Caco-2 (cell line): ENCODE measurements at regions of chr13 and their contacts with region 1.

Region 1: GRCh38 chr13:32228330-32229041 is 86.7 kb downstream of the ZAR1L start:
- DNase-seq: peak; percentile 81 to 85
- H3K4me3 ChIP-seq: no peak overlapping the region
- H3K4me3 Mint-ChIP-seq: peak overlapping the region; percentile 6
- H3K27ac Mint-ChIP-seq: peak overlapping the region; percentile 14
- H3K4me1 ChIP-seq: peaks cover 46% of the 10 kb centered on the region
- H3K4me1 Mint-ChIP-seq: peaks cover 26% of the 10 kb centered on the region
- H3K27me3 ChIP-seq: no peaks in the 10 kb centered on the region
- H3K27me3 Mint-ChIP-seq: no peaks in the 10 kb centered on the region
- CTCF ChIP-seq: peak; percentile 10 to 39

Region 2: GRCh38 chr13:32142956-32143375 is 85.5 kb before region 1 on chr13:
- CTCF ChIA-PET with region 1: no interaction called
- POLR2A ChIA-PET with region 1: no interaction called
- intact Hi-C with region 1: loop called (anchors 2 kb)
- DNase-seq: peak; percentile 88 to 93
- H3K4me3 ChIP-seq: no peak overlapping the region
- H3K4me3 Mint-ChIP-seq: peak overlapping the region; percentile 34
- H3K27ac Mint-ChIP-seq: peak overlapping the region; percentile 89
- H3K4me1 ChIP-seq: peaks cover 50% of the 10 kb centered on the region
- H3K4me1 Mint-ChIP-seq: peaks cover 64% of the 10 kb centered on the region
- H3K27me3 ChIP-seq: no peaks in the 10 kb centered on the region; the same call in 1 of the 2 replicates
- H3K27me3 Mint-ChIP-seq: no peaks in the 10 kb centered on the region
- CTCF ChIP-seq: no peak

Region 3: GRCh38 chr13:32216286-32216685 is 12.2 kb before region 1 on chr13:
- CTCF ChIA-PET with region 1: interaction called, 7 read pairs
- POLR2A ChIA-PET with region 1: interaction called, 11 read pairs
- intact Hi-C with region 1: loop called (anchors 1 kb)
- DNase-seq: peak; percentile 64 to 67
- H3K4me3 ChIP-seq: no peak overlapping the region
- H3K4me3 Mint-ChIP-seq: peak overlapping the region; percentile 73
- H3K27ac Mint-ChIP-seq: peak overlapping the region; percentile 85
- H3K4me1 ChIP-seq: peaks cover 70% of the 10 kb centered on the region
- H3K4me1 Mint-ChIP-seq: peaks cover 42% of the 10 kb centered on the region
- H3K27me3 ChIP-seq: no peaks in the 10 kb centered on the region
- H3K27me3 Mint-ChIP-seq: no peaks in the 10 kb centered on the region
- CTCF ChIP-seq: no peak

Region 4: GRCh38 chr13:32255724-32256109 is 27.2 kb after region 1 on chr13:
- CTCF ChIA-PET with region 1: interaction called, 3 read pairs
- POLR2A ChIA-PET with region 1: interaction called, 6 read pairs
- intact Hi-C with region 1: loop called (anchors 1 kb)
- DNase-seq: peak in 1 of 2 experiments; percentile 76
- H3K4me3 ChIP-seq: no peak overlapping the region
- H3K4me3 Mint-ChIP-seq: peak overlapping the region; percentile 55
- H3K27ac Mint-ChIP-seq: peak overlapping the region; percentile 83
- H3K4me1 ChIP-seq: peaks cover 75% of the 10 kb centered on the region
- H3K4me1 Mint-ChIP-seq: peaks cover 44% of the 10 kb centered on the region
- H3K27me3 ChIP-seq: no peaks in the 10 kb centered on the region
- H3K27me3 Mint-ChIP-seq: no peaks in the 10 kb centered on the region
- CTCF ChIP-seq: no peak

Region 5: DNA sequence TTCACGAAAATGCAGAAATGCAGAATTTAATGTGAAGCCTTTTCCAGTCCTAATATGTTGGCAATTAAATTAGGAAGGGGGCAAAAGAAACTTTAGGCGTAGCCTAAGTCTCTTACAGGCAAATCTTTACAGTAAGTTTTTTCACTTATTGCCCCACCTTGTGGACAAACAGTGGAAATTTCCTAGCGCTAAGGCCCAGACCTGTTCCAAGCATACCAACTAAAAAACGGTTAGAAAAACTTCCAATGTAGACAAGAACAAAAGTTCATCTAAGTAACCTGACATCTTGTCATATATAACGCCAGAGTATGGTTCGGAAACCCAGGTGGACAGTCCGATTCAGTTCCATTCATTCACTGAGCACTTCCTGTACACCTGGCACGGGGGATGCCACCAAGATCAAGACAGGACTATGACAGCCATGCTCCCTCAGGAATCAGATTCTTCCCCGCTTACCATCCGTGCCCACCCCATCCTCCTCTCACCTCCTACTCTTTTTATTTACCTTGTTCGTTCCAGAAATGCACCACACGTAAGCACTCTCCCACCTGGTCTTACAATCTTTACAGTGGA is 81.7 kb after region 1 on chr13:
- CTCF ChIA-PET with region 1: no interaction called
- POLR2A ChIA-PET with region 1: interaction called, 11 read pairs
- intact Hi-C with region 1: no loop called
- DNase-seq: peak in 1 of 2 experiments; percentile 62
- H3K4me3 ChIP-seq: no peak overlapping the region
- H3K4me3 Mint-ChIP-seq: no peak overlapping the region
- H3K27ac Mint-ChIP-seq: no peak overlapping the region
- H3K4me1 ChIP-seq: peaks cover 23% of the 10 kb centered on the region
- H3K4me1 Mint-ChIP-seq: peaks cover 6% of the 10 kb centered on the region
- H3K27me3 ChIP-seq: no peaks in the 10 kb centered on the region
- H3K27me3 Mint-ChIP-seq: no peaks in the 10 kb centered on the region
- CTCF ChIP-seq: peak; percentile 70 to 84